ENCODE measurements at regions of chr3 and their contacts with region 1.

Region 1: DNA sequence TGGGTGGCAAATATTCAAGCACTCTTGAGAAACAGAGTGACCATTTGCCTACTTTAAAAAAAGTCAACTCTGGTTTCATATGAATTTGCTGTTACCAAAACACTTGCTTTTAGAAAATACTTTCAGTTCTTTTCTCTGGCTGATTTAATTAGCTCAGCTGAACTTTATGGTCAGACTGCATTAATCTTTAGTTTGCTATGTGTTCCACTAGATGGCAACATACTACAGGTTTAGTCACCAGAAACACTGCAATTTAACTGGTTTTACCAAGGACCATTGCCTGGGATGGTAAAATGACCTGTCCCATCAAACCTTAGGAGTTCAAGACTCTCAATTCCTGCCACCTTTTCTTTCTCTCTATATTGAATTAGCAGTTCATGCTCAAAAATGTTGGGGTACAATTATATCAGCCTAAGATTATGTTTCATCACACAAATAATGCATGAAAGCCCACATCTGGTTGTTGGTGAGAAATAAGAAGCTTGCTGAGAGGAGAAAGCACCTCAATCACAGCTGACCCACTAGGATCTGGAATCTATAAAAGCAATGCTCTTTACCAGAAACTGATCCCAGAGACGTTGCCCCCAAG is 14.2 kb downstream of the EIF4E3 start:
- DNase-seq: peak in 1 of 2 experiments; percentile 29
- H3K4me3 ChIP-seq: no peak overlapping the region
- H3K4me3 Mint-ChIP-seq: no peak overlapping the region
- H3K27ac Mint-ChIP-seq: no peak overlapping the region
- H3K4me1 ChIP-seq: peaks cover 9% of the 10 kb centered on the region
- H3K4me1 Mint-ChIP-seq: no peaks in the 10 kb centered on the region
- H3K27me3 ChIP-seq: no peaks in the 10 kb centered on the region
- H3K27me3 Mint-ChIP-seq: no peaks in the 10 kb centered on the region
- CTCF ChIP-seq: peak; percentile 38 to 57

Region 2: DNA sequence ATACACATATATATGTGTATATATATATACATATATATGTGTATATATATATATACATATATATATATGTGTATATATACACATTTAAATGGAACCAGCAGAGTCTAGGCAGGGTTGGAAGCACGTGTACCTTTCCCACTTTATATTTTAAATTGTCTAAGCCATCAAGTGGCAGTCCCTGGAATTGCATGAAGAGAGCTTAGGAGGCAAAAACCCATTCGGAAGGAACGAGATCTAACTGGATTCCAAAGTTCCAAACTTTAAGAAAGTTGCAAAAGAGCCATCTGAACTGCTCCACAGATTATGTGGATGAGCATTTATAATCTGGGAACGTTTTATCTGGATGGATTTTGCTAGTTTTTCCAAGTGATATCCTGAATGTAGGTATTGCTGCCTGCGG is 314.0 kb before region 1 on chr3:
- CTCF ChIA-PET with region 1: no interaction called
- POLR2A ChIA-PET with region 1: no interaction called
- intact Hi-C with region 1: no loop called
- DNase-seq: peak in 1 of 2 experiments; percentile 45
- H3K4me3 ChIP-seq: no peak overlapping the region
- H3K4me3 Mint-ChIP-seq: no peak overlapping the region
- H3K27ac Mint-ChIP-seq: no peak overlapping the region
- H3K4me1 ChIP-seq: peaks cover 32% of the 10 kb centered on the region
- H3K4me1 Mint-ChIP-seq: peaks cover 22% of the 10 kb centered on the region
- H3K27me3 ChIP-seq: no peaks in the 10 kb centered on the region
- H3K27me3 Mint-ChIP-seq: no peaks in the 10 kb centered on the region
- CTCF ChIP-seq: peak; percentile 34 to 50

Region 3: GRCh38 chr3:71487418-71487817 is 223.6 kb before region 1 on chr3:
- CTCF ChIA-PET with region 1: no interaction called
- POLR2A ChIA-PET with region 1: no interaction called
- intact Hi-C with region 1: no loop called
- DNase-seq: no peak
- H3K4me3 ChIP-seq: no peak overlapping the region
- H3K4me3 Mint-ChIP-seq: no peak overlapping the region
- H3K27ac Mint-ChIP-seq: no peak overlapping the region
- H3K4me1 ChIP-seq: no peaks in the 10 kb centered on the region
- H3K4me1 Mint-ChIP-seq: no peaks in the 10 kb centered on the region
- H3K27me3 ChIP-seq: no peaks in the 10 kb centered on the region
- H3K27me3 Mint-ChIP-seq: no peaks in the 10 kb centered on the region
- CTCF ChIP-seq: no peak

Region 4: GRCh38 chr3:71512000-71512399 is 199.0 kb before region 1 on chr3:
- CTCF ChIA-PET with region 1: no interaction called
- POLR2A ChIA-PET with region 1: no interaction called
- intact Hi-C with region 1: no loop called
- DNase-seq: peak in 1 of 2 experiments; percentile 21
- H3K4me3 ChIP-seq: no peak overlapping the region
- H3K4me3 Mint-ChIP-seq: no peak overlapping the region
- H3K27ac Mint-ChIP-seq: no peak overlapping the region
- H3K4me1 ChIP-seq: peaks cover 9% of the 10 kb centered on the region
- H3K4me1 Mint-ChIP-seq: peaks cover 5% of the 10 kb centered on the region
- H3K27me3 ChIP-seq: no peaks in the 10 kb centered on the region
- H3K27me3 Mint-ChIP-seq: no peaks in the 10 kb centered on the region
- CTCF ChIP-seq: no peak

Region 5: DNA sequence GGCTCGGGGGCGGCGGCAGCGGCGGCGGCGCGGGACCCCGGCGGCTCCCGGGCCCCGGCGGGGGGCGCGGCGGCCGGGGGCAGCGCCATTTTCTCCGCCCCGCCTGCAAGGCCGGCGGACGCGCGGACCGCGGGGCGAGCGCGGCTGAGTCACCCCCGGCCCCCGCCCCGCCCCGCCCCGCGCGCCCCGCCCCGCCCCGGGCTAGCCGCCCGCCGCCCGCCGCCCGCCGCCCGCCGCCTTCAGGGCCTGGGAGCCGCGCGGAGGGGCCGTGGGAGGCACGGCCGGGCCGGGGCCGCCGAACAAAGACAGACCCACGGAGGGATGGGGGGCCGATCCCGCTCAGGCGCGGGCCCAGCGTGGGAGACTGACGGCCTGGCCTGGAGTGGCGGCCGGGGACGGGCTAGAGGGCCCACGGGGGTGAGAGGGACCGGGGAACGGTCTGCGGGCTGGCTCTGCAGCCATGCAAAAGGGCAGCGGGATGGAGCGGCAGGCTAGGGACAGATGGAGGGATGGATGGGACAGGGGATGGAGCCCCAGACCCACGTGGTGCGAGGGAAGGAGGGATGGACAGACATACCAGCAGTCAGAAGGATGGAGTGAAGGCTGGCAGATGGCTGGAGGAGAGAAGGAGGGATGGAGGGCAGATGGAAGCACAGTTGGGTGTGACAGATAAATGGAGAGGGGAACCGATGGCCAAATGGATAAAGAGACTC is 14.4 kb after region 1 on chr3 and contains the start of gene EIF4E3:
- CTCF ChIA-PET with region 1: interaction called, 12 read pairs
- POLR2A ChIA-PET with region 1: no interaction called
- intact Hi-C with region 1: no loop called
- DNase-seq: peak in 1 of 2 experiments; percentile 32
- H3K4me3 ChIP-seq: peak within 1 kb of the TSS; percentile 76
- H3K4me3 Mint-ChIP-seq: peak within 1 kb of the TSS; percentile 77
- H3K27ac Mint-ChIP-seq: no peak within 1 kb of the TSS
- H3K4me1 ChIP-seq: 0 out of 2 replicates have a peak, but pooled peaks cover 6% of the 10 kb centered on the region
- H3K4me1 Mint-ChIP-seq: no peaks in the 10 kb centered on the region
- H3K27me3 ChIP-seq: peaks cover 3% of the 10 kb centered on the region
- H3K27me3 Mint-ChIP-seq: peaks cover 33% of the 10 kb centered on the region
- CTCF ChIP-seq: no peak
- total RNA-seq, gene EIF4E3: 1.2 and 1.7 TPM in 2 replicates

Region 6: GRCh38 chr3:71759401-71759800 is 48.4 kb after region 1 on chr3:
- CTCF ChIA-PET with region 1: no interaction called
- POLR2A ChIA-PET with region 1: no interaction called
- intact Hi-C with region 1: no loop called
- DNase-seq: no peak
- H3K4me3 ChIP-seq: no peak overlapping the region
- H3K4me3 Mint-ChIP-seq: no peak overlapping the region
- H3K27ac Mint-ChIP-seq: no peak overlapping the region
- H3K4me1 ChIP-seq: no peaks in the 10 kb centered on the region
- H3K4me1 Mint-ChIP-seq: no peaks in the 10 kb centered on the region
- H3K27me3 ChIP-seq: peaks cover 2% of the 10 kb centered on the region; the same call in 1 of the 2 replicates
- H3K27me3 Mint-ChIP-seq: peaks cover 30% of the 10 kb centered on the region
- CTCF ChIP-seq: no peak

Region 7: DNA sequence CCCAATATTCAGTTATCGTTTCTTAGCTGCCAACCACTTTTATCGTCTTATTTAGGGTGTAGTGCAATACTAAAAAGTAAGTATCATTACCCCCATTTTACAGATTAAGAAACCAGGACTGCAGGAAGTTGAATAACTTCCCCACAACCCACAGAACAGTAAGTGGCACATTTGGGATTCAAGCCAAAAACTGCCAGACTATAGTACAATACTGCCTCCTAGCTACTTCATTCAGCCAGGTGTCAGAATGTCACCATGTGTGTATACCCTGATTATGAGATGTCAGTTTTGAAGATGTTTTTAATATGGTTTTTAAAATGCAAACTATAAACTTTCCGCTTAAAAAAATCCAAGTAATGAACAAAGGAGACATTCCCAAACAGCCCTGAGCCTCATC is 148.1 kb after region 1 on chr3:
- CTCF ChIA-PET with region 1: interaction called, 5 read pairs
- POLR2A ChIA-PET with region 1: no interaction called
- intact Hi-C with region 1: loop called (anchors 1 kb)
- DNase-seq: no peak
- H3K4me3 ChIP-seq: no peak overlapping the region
- H3K4me3 Mint-ChIP-seq: no peak overlapping the region
- H3K27ac Mint-ChIP-seq: no peak overlapping the region
- H3K4me1 ChIP-seq: no peaks in the 10 kb centered on the region
- H3K4me1 Mint-ChIP-seq: no peaks in the 10 kb centered on the region
- H3K27me3 ChIP-seq: no peaks in the 10 kb centered on the region
- H3K27me3 Mint-ChIP-seq: peaks cover 16% of the 10 kb centered on the region
- CTCF ChIP-seq: peak in 1 of 2 experiments; percentile 52

Region 8: GRCh38 chr3:71955240-71956068 is 244.5 kb after region 1 on chr3:
- CTCF ChIA-PET with region 1: no interaction called
- POLR2A ChIA-PET with region 1: no interaction called
- intact Hi-C with region 1: loop called (anchors 10 kb)
- DNase-seq: peak; percentile 45 to 49
- H3K4me3 ChIP-seq: no peak overlapping the region
- H3K4me3 Mint-ChIP-seq: no peak overlapping the region
- H3K27ac Mint-ChIP-seq: no peak overlapping the region
- H3K4me1 ChIP-seq: no peaks in the 10 kb centered on the region
- H3K4me1 Mint-ChIP-seq: no peaks in the 10 kb centered on the region
- H3K27me3 ChIP-seq: no peaks in the 10 kb centered on the region
- H3K27me3 Mint-ChIP-seq: peaks cover 12% of the 10 kb centered on the region
- CTCF ChIP-seq: peak; percentile 64 to 84